Activated CD8-positive, alpha-beta T cell treated with anti-CD3 and anti-CD28 coated beads for 36 hours (primary cell): ENCODE measurements at regions of chr19 and their contacts with region 1.

Region 1: GRCh38 chr19:50804420-50805272 is 14.4 kb downstream of the ACP4 start:
- DNase-seq: peak; percentile 100
- ATAC-seq: peak; percentile 97
- H3K4me3 Mint-ChIP-seq: peak overlapping the region; percentile 95
- H3K27ac Mint-ChIP-seq: peak overlapping the region; percentile 100
- H3K4me1 Mint-ChIP-seq: peaks cover 29% of the 10 kb centered on the region
- H3K27me3 Mint-ChIP-seq: no peaks in the 10 kb centered on the region
- CTCF ChIP-seq: no peak

Region 2: DNA sequence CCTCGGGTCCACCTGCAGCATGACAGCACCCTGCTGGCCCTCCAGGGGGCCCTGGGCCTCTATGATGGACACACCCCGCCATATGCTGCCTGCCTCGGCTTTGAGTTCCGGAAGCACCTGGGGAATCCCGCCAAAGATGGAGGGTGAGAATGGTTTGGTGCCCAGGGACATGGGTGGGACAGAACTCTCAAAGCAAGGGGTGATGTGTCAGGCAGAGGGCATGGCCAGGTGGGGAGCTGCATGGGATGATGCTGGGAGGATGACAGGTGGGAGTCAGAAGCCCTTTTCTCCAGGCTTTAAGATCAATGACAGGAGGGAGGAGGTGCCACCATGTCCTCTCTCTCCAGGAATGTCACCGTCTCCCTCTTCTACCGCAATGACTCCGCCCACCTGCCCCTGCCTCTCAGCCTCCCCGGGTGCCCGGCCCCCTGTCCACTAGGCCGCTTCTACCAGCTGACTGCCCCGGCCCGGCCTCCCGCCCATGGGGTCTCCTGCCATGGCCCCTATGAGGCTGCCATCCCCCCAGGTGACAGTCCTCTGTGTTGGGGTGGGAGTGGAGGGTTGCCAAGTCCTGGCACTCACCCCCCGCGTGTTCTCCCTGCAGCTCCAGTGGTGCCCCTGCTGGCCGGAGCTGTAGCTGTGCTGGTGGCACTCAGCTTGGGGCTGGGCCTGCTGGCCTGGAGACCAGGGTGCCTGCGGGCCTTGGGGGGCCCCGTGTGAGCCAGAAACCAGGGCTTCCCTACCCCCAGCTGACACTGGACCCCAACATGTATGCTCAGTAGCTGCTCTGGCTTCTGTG is 10.0 kb before region 1 on chr19:
- CTCF ChIA-PET with region 1: interaction called, 3 read pairs
- POLR2A ChIA-PET with region 1: interaction called, 99 read pairs
- intact Hi-C with region 1: no loop called
- DNase-seq: peak; percentile 62
- ATAC-seq: peak; percentile 21
- H3K4me3 Mint-ChIP-seq: no peak overlapping the region
- H3K27ac Mint-ChIP-seq: peak overlapping the region; percentile 64
- H3K4me1 Mint-ChIP-seq: peaks cover 9% of the 10 kb centered on the region
- H3K27me3 Mint-ChIP-seq: no peaks in the 10 kb centered on the region
- CTCF ChIP-seq: peak; percentile 10

Region 3: DNA sequence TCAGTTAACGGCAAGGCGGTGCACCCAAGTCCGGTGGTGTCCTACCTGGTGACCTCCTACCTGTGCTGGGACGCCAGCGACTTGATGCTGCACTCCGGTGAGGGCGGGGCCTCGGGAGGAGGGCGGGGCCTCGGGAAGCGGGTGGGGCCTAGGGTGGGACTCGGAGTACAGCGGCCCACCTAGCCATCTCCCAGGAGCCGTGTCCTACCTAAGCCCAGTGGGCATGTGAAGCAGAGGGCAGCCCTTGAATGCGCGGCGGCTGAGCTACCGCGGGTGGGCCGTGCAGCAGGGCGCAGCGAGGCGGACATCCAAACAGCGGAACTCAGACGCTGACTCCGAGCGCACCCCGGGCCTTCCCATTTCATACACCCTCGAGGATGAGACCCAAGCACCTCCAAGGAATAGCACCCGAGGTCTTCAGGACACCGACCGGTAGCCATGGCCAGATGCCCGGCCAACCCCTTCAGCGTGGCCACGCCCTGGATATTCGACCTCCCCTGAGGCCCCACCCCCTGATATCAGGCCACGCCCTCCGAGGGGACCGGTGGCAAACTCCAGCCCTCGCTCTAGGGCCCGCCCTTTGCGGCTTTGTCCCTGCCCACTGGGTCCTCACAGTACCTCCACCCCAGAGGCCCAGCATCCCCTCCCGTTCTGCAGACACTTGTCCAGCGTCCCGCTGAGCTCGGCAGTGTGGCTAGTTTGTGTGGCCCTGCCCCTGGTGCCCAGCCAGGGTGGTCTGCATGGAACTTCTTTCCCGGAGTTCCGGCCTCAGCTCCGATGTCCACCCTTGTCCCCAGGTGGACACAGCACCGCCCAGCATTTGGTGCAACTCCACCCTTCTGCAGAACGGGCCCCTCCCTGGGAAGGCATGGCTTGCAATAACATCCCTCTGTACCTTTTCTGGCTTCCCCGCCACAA is 13.6 kb after region 1 on chr19:
- CTCF ChIA-PET with region 1: no interaction called
- POLR2A ChIA-PET with region 1: interaction called, 22 read pairs
- intact Hi-C with region 1: no loop called
- DNase-seq: peak; percentile 73
- ATAC-seq: peak; percentile 63
- H3K4me3 Mint-ChIP-seq: peak overlapping the region; percentile 70
- H3K27ac Mint-ChIP-seq: peak overlapping the region; percentile 71
- H3K4me1 Mint-ChIP-seq: peaks cover 40% of the 10 kb centered on the region
- H3K27me3 Mint-ChIP-seq: peaks cover 73% of the 10 kb centered on the region
- CTCF ChIP-seq: no peak